Posterior vena cava (tissue), 2 donors: ENCODE measurements at regions of chr22 and their contacts with region 1.

Region 1: GRCh38 chr22:41762980-41763779 is 37.3 kb upstream of the CCDC134 start:
- DNase-seq: peak; percentile 37

Region 2: DNA sequence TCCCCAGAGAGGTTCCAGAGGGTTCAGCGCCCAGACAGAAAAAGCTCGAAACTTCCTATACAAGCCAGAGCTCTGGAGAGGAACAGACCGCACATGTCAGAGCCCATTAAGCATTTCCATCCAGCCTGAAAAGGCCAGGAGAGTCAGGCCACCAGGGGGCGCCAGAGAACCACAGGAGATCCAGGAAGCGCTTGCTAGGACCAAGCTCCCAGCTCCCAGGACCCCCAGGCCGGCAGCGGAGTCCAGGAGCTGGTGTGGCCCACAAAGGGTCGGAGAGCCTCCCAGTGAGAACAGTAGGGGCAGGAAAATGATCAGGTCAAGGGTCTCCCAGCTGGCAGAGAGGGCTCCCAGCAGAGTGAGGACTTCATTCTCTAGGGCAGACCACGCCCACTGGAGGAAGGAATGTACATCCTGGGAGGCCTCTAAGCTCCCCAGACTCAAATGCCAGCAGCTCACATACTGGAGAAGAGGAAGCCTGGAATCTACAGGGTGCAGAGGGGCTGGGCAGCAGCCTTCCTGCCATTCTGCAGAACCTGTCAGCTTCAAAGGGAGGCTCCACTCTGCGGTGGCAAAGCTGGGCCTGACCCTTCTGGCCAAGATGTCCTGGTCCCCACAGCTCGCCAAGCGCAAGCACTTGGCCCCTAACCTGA is 65.9 kb before region 1 on chr22:
- intact Hi-C with region 1: no loop called
- DNase-seq: peak; percentile 98

Region 3: GRCh38 chr22:41725510-41726110 is 37.6 kb before region 1 on chr22:
- intact Hi-C with region 1: loop called in 1 of 2 experiments (anchors 1 kb)
- DNase-seq: no peak

Region 4: DNA sequence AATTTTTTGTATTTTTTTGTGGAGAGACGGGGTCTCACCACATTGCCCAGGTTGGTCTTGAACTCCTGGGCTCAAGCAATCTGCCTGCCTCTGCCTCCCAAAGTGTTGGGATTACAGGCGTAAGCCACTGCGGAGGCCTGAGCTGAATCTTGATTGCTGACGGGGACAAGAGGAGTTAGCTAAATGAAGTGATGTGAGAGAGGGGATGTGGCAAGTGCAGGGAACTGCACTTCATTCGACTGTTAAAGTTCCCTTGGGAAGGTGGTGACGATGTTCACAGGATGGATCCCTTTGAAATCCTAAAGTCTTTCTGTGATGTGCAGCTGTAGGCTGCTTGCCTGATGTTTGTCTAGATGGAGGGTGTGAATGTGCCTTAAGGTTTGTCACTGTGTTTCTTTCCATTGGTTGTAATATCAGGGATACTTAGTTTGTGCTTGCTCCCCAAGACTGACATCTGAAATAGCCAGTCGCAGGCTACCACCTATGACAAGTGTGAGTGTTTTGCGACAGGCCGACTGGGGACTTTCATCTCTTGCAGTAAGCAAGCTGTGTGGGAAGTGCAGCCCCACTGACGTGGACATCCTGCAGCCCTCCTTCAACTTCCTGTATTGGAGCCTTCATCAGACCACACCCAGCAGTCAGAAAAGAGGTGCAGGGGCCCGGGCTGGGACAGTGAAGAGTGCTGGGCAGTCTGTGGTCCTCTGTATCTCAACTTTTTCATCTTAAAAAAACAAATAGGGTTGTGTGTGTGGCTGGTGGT is 17.7 kb after region 1 on chr22:
- intact Hi-C with region 1: no loop called
- DNase-seq: peak; percentile 91